ENCODE measurements at regions of chrX and their contacts with region 1.

Region 1: DNA sequence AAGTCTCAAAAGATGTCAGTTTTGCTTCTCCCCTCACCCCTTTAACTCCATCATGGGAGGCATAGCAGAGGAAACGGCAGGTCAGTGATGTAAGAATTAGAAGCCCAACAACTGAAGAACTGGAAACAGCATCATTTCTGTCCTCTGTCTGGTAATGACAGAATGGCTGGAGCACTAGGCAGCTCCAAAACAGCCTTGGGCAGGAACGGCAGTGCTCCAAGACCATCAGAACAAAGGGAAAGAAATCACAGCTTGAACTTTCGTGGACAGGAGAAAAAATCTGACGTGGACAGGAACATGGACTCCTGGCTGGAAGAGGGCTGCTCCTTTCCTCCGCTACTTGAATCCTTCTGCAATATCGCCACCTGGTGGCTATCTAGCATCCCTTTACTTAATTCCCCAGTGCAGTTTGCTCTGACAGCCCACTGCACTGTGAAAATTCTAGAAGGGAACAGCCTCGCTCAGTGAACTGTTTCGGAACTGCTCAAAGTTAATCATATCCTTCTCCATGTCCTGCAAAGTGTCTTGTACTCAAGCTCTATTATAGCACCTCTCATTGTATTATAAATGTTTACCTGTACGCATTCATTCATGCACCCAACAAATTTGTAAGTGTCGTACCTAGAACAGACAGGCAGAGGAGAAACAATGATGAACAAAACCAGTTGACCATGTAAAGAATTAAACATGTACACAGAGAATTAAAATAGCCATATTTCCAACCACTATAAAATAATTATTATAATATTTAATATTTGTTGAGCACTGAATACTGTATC is 20.4 kb downstream of the SLC25A53 start:
- H3K4me3 ChIP-seq: peak overlapping the region; percentile 27; the same call in 1 of the 2 replicates
- H3K27ac ChIP-seq: no peak overlapping the region
- H3K4me1 ChIP-seq: no peaks in the 10 kb centered on the region
- CTCF ChIP-seq: peak; percentile 64; the same call in 1 of the 2 replicates

Region 2: GRCh38 chrX:104098151-104098808 is 38.1 kb before region 1 on chrX:
- CTCF ChIA-PET with region 1: interaction called, 36 read pairs
- POLR2A ChIA-PET with region 1: interaction called, 3 read pairs
- H3K4me3 ChIP-seq: no peak overlapping the region
- H3K27ac ChIP-seq: no peak overlapping the region
- H3K4me1 ChIP-seq: no peaks in the 10 kb centered on the region
- CTCF ChIP-seq: peak; percentile 37; the same call in 1 of the 2 replicates

Region 3: GRCh38 chrX:104113222-104113965 is 23.0 kb before region 1 on chrX:
- CTCF ChIA-PET with region 1: interaction called, 22 read pairs
- POLR2A ChIA-PET with region 1: no interaction called
- H3K4me3 ChIP-seq: peak overlapping the region; percentile 57
- H3K27ac ChIP-seq: no peak overlapping the region
- H3K4me1 ChIP-seq: no peaks in the 10 kb centered on the region
- CTCF ChIP-seq: peak; percentile 58

Region 4: DNA sequence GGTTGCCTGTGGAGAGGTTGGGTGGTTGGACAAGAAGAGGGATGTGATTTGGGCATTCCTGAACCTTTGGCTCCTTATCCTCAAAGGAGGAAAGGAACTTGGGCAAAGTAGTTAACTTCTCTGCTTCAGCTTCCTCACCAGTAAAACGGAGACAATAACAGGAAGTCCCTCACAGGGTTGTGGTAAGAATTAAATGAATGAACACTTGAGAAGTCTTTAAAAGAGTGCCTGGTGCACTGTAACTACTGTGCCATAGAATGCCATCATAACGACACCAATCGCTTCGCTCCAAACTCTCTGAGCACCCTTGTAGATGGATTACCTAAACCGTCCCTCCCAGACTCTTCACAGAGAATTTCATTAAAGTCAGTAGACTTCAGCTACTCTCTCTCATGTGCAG is 13.6 kb before region 1 on chrX:
- CTCF ChIA-PET with region 1: interaction called, 22 read pairs
- POLR2A ChIA-PET with region 1: no interaction called
- H3K4me3 ChIP-seq: no peak overlapping the region
- H3K27ac ChIP-seq: no peak overlapping the region
- H3K4me1 ChIP-seq: no peaks in the 10 kb centered on the region
- CTCF ChIP-seq: no peak

Measured in HEK293 (cell line).